ENCODE measurements at regions of chr4 and their contacts with region 1.

Region 1: GRCh38 chr4:73859614-73860088 is 6.6 kb downstream of the PF4V1 start:
- DNase-seq: peak; percentile 88
- ATAC-seq: peak; percentile 91
- H3K4me3 ChIP-seq: no peak overlapping the region
- H3K27ac ChIP-seq: no peak overlapping the region
- H3K4me1 ChIP-seq: peaks cover 11% of the 10 kb centered on the region
- H3K27me3 ChIP-seq: peaks cover 21% of the 10 kb centered on the region
- CTCF ChIP-seq: no peak
- POLR2A ChIP-seq: no peak
- RAD21 ChIP-seq: no peak

Region 2: DNA sequence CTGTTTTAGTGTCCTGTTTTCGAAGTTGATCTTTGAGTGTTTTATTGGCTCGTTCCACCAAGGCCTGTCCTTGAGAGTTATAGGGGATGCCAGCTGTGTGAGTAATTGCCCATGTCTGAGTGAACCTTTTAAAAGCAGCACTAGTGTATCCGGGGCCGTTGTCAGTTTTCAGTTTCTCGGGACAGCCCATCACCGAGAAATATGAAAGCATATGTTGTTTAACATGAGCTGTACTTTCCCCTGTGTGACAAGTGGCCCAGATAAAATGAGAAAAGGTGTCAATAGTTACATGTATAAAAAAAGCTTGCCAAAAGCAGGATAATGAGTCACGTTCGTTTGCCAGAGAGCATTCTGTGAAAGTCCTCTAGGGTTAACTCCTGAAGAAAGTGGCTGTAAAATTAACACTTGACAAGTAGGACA is 190.9 kb before region 1 on chr4:
- CTCF ChIA-PET with region 1: no interaction called
- POLR2A ChIA-PET with region 1: no interaction called
- dilution Hi-C with region 1: no loop called
- in situ Hi-C with region 1: no loop called
- intact Hi-C with region 1: loop called (anchors 2 kb)
- DNase-seq: no peak
- ATAC-seq: no peak
- H3K4me3 ChIP-seq: no peak overlapping the region
- H3K27ac ChIP-seq: no peak overlapping the region
- H3K4me1 ChIP-seq: peaks cover 6% of the 10 kb centered on the region; the same call in 1 of the 2 replicates
- H3K27me3 ChIP-seq: no peaks in the 10 kb centered on the region
- CTCF ChIP-seq: no peak
- POLR2A ChIP-seq: no peak
- RAD21 ChIP-seq: no peak

Region 3: GRCh38 chr4:73891739-73892405 is 32.2 kb after region 1 on chr4:
- CTCF ChIA-PET with region 1: no interaction called
- POLR2A ChIA-PET with region 1: interaction called, 3 read pairs
- dilution Hi-C with region 1: no loop called
- in situ Hi-C with region 1: no loop called
- intact Hi-C with region 1: loop called (anchors 5 kb)
- DNase-seq: peak; percentile 92
- ATAC-seq: peak; percentile 73
- H3K4me3 ChIP-seq: no peak overlapping the region
- H3K27ac ChIP-seq: peak overlapping the region; percentile 73
- H3K4me1 ChIP-seq: peaks cover 9% of the 10 kb centered on the region
- H3K27me3 ChIP-seq: peaks cover 2% of the 10 kb centered on the region; the same call in 1 of the 2 replicates
- CTCF ChIP-seq: no peak
- POLR2A ChIP-seq: no peak
- RAD21 ChIP-seq: no peak

Region 4: GRCh38 chr4:73917081-73917501 is 57.4 kb after region 1 on chr4:
- CTCF ChIA-PET with region 1: no interaction called
- POLR2A ChIA-PET with region 1: no interaction called
- dilution Hi-C with region 1: no loop called
- in situ Hi-C with region 1: no loop called
- intact Hi-C with region 1: loop called (anchors 5 kb)
- DNase-seq: peak; percentile 96
- ATAC-seq: peak; percentile 94
- H3K4me3 ChIP-seq: no peak overlapping the region
- H3K27ac ChIP-seq: no peak overlapping the region; the same call in 1 of the 2 replicates
- H3K4me1 ChIP-seq: peaks cover 17% of the 10 kb centered on the region
- H3K27me3 ChIP-seq: peaks cover 24% of the 10 kb centered on the region
- CTCF ChIP-seq: no peak
- POLR2A ChIP-seq: no peak
- RAD21 ChIP-seq: no peak

Region 5: DNA sequence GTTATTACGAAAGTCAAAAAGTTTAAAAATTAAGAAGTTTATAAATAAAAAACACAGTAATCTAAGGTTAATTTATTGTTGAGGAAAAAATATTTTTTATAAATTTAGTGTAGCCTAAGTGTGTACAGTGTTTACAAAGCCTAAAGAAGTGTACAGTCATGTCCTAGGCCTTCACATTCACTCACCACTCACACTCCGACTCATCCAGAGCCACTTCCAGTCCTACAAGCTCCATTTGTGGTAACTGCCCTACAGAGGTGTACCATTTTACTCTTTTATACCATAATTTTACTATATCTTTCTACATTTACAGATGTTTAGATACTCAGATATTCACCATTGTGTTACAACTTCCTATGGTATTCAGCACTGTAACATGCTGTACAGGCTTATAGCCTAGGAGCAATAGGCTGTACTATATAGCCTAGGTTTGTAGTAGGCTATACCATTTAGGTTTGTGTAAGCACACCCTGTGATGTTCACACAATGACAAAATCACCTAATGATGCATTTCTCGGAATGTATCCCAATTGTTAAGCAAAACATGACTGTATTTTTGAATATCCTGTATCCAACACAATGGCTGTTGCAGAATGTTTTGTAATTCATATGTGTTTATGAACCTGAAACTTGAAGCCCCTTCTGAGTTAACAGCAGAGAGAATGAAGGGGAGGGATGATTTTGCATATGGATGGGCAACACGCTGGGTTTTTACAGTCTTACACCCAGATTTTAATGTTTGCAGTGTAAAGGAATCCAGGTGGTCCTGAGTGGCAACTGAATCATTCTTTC is 125.3 kb after region 1 on chr4:
- CTCF ChIA-PET with region 1: no interaction called
- POLR2A ChIA-PET with region 1: no interaction called
- dilution Hi-C with region 1: no loop called
- in situ Hi-C with region 1: no loop called
- intact Hi-C with region 1: no loop called
- DNase-seq: peak; percentile 70
- ATAC-seq: peak; percentile 54
- H3K4me3 ChIP-seq: no peak overlapping the region
- H3K27ac ChIP-seq: no peak overlapping the region
- H3K4me1 ChIP-seq: no peaks in the 10 kb centered on the region
- H3K27me3 ChIP-seq: peaks cover 7% of the 10 kb centered on the region
- CTCF ChIP-seq: no peak
- POLR2A ChIP-seq: no peak
- RAD21 ChIP-seq: no peak